ENCODE measurements at regions of chr6 and their contacts with region 1.

Region 1: GRCh38 chr6:101226626-101227165 is 166.8 kb upstream of the GRIK2 start:
- DNase-seq: peak; percentile 43 to 45
- H3K4me3 ChIP-seq: no peak overlapping the region
- H3K4me3 Mint-ChIP-seq: no peak overlapping the region
- H3K27ac Mint-ChIP-seq: no peak overlapping the region
- H3K4me1 ChIP-seq: no peaks in the 10 kb centered on the region
- H3K4me1 Mint-ChIP-seq: no peaks in the 10 kb centered on the region
- H3K27me3 ChIP-seq: no peaks in the 10 kb centered on the region
- H3K27me3 Mint-ChIP-seq: no peaks in the 10 kb centered on the region
- CTCF ChIP-seq: peak in 1 of 2 experiments; percentile 38

Region 2: DNA sequence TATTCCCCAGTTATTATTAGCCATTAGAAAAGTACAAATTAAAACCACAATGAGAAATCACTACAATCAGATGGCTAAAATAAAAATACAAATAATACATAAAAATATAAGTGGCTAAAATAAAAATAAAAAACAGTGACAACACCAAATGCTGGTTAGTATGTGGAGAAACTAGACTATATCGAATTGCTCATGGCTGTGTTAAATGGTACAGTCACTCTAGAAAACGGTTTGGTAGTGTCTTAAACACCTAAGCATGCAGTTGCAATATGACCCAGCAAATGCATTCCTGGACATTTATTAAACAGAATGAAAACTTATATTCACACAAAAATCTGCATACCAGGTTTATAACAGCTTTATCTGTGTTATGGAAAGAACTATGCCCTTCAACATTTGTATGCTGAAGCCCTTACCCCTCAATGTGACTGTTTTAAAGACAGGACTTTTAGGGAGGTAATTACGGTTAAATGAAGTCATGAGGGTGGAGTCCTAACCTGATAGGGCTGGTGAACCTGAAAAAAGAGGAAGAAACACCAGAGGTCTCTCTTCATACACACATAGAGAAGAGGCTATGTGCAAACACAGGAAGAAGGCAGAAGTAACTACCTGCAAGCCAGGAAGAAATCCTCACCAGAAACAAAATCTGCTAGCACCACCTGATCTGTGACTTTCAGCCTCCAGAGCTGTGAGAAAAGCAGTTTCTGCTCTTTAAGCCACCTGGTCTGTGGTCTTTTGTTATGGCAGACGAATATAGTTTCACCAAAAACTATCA is 430.5 kb before region 1 on chr6:
- CTCF ChIA-PET with region 1: no interaction called
- POLR2A ChIA-PET with region 1: no interaction called
- intact Hi-C with region 1: loop called (anchors 2 kb)
- DNase-seq: peak in 1 of 2 experiments; percentile 8
- H3K4me3 ChIP-seq: no peak overlapping the region
- H3K4me3 Mint-ChIP-seq: no peak overlapping the region
- H3K27ac Mint-ChIP-seq: no peak overlapping the region
- H3K4me1 ChIP-seq: peaks cover 5% of the 10 kb centered on the region; the same call in 1 of the 2 replicates
- H3K4me1 Mint-ChIP-seq: peaks cover 7% of the 10 kb centered on the region
- H3K27me3 ChIP-seq: no peaks in the 10 kb centered on the region
- H3K27me3 Mint-ChIP-seq: no peaks in the 10 kb centered on the region
- CTCF ChIP-seq: peak in 1 of 2 experiments; percentile 5

Region 3: DNA sequence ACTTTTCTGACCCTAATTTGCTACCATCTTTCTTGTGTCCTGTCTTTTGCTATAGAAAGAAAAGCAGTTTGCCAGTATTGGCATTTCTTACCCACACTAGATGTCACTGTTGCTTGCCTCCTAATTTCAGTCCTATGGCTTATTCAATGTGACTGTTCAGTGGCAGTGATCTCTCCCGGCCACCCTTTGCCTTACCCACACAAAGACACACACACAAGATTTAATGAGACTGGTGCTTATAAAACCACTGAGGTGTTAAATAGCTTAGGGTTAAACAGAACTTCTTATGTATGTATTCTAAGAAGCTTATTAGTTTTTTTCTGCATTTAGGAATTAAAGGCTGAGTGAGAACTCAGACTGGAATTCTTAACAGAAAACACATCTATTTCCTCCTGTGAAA is 112.0 kb before region 1 on chr6:
- CTCF ChIA-PET with region 1: interaction called, 3 read pairs
- POLR2A ChIA-PET with region 1: no interaction called
- intact Hi-C with region 1: loop called (anchors 2 kb)
- DNase-seq: peak in 1 of 2 experiments; percentile 23
- H3K4me3 ChIP-seq: no peak overlapping the region
- H3K4me3 Mint-ChIP-seq: no peak overlapping the region
- H3K27ac Mint-ChIP-seq: no peak overlapping the region
- H3K4me1 ChIP-seq: no peaks in the 10 kb centered on the region
- H3K4me1 Mint-ChIP-seq: no peaks in the 10 kb centered on the region
- H3K27me3 ChIP-seq: no peaks in the 10 kb centered on the region
- H3K27me3 Mint-ChIP-seq: no peaks in the 10 kb centered on the region
- CTCF ChIP-seq: peak; percentile 12 to 48

Region 4: GRCh38 chr6:101294676-101295075 is 68.0 kb after region 1 on chr6:
- CTCF ChIA-PET with region 1: no interaction called
- POLR2A ChIA-PET with region 1: no interaction called
- intact Hi-C with region 1: no loop called
- DNase-seq: no peak
- H3K4me3 ChIP-seq: no peak overlapping the region
- H3K4me3 Mint-ChIP-seq: no peak overlapping the region
- H3K27ac Mint-ChIP-seq: no peak overlapping the region
- H3K4me1 ChIP-seq: no peaks in the 10 kb centered on the region
- H3K4me1 Mint-ChIP-seq: no peaks in the 10 kb centered on the region
- H3K27me3 ChIP-seq: no peaks in the 10 kb centered on the region
- H3K27me3 Mint-ChIP-seq: no peaks in the 10 kb centered on the region
- CTCF ChIP-seq: no peak

Measured in Caco-2 (cell line).